ENCODE measurements at regions of chr13 and their contacts with region 1.

Region 1: DNA sequence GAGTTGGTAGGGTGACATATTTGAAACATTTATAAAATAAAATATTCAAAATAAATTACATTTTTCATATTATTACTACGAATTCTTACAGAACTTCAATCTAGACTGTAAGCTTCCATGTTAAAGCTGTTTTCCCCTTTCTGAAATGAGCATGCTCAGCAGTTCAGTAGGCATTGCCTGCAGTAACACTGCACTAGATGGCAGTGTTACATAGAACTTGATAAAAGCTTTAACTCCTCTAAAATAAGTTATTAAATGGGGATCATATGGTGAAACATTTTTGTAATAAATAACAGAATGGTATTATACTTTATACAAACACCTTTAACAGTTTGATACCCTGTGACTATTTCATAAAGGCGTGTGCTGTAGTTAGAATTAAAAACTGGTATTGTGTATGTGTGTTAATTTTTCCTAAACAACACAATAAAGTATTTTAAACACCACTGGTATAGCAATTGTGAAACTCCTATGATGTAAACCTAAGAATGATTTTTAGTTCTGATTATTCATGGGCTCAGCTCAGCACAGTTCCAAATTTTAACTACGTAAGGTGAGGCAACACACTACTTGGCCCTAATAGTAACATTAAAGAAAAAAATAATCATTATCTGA is 11.6 kb upstream of the GPR18 start:
- DNase-seq: peak; percentile 38
- ATAC-seq: peak; percentile 78
- H3K4me3 ChIP-seq: no peak overlapping the region
- H3K27ac ChIP-seq: no peak overlapping the region
- H3K4me1 ChIP-seq: no peaks in the 10 kb centered on the region; a peak in 1 of 4 replicates
- H3K27me3 ChIP-seq: no peaks in the 10 kb centered on the region
- CTCF ChIP-seq: peak; percentile 66 to 97 (median 75)
- POLR2A ChIP-seq: no peak
- RAD21 ChIP-seq: peak; percentile 84

Region 2: DNA sequence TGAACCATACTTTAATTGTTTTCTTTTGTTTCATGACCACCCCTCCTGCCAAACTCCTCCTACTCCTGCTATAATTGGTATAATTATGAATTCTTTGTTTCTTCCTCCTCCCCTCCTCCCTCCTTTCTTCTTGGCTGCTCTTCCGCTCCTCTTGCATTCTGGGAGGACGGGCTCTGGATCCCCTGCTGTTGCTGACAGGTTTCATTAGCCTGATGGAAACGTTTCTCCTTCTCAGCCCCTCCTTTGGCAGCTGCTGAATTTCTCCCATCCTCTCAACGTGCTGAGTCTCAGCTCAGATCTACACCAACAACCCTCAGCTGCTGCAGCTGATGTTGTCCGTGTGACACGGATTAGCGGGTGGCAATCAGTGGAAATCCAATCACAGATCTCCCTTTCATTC is 166.2 kb before region 1 on chr13:
- CTCF ChIA-PET with region 1: no interaction called
- POLR2A ChIA-PET with region 1: no interaction called
- RAD21 ChIA-PET with region 1: no interaction called
- intact Hi-C with region 1: no loop called
- DNase-seq: no peak
- ATAC-seq: no peak
- H3K4me3 ChIP-seq: no peak overlapping the region
- H3K27ac ChIP-seq: no peak overlapping the region
- H3K4me1 ChIP-seq: no peaks in the 10 kb centered on the region
- H3K27me3 ChIP-seq: no peaks in the 10 kb centered on the region
- CTCF ChIP-seq: no peak
- POLR2A ChIP-seq: no peak
- RAD21 ChIP-seq: no peak

Region 3: GRCh38 chr13:99176309-99177276 is 93.1 kb before region 1 on chr13:
- CTCF ChIA-PET with region 1: interaction called, 54 read pairs
- POLR2A ChIA-PET with region 1: interaction called, 3 read pairs
- RAD21 ChIA-PET with region 1: interaction called, 7 to 11 read pairs
- intact Hi-C with region 1: loop called (anchors 1 kb)
- DNase-seq: peak; percentile 62
- ATAC-seq: peak; percentile 98
- H3K4me3 ChIP-seq: no peak overlapping the region
- H3K27ac ChIP-seq: no peak overlapping the region
- H3K4me1 ChIP-seq: peaks cover 0 to 10% of the 10 kb centered on the region in 2 experiments; a peak in 1 of 4 replicates
- H3K27me3 ChIP-seq: no peaks in the 10 kb centered on the region
- CTCF ChIP-seq: peak; percentile 91 to 98 (median 94)
- POLR2A ChIP-seq: no peak
- RAD21 ChIP-seq: peak; percentile 94

Region 4: DNA sequence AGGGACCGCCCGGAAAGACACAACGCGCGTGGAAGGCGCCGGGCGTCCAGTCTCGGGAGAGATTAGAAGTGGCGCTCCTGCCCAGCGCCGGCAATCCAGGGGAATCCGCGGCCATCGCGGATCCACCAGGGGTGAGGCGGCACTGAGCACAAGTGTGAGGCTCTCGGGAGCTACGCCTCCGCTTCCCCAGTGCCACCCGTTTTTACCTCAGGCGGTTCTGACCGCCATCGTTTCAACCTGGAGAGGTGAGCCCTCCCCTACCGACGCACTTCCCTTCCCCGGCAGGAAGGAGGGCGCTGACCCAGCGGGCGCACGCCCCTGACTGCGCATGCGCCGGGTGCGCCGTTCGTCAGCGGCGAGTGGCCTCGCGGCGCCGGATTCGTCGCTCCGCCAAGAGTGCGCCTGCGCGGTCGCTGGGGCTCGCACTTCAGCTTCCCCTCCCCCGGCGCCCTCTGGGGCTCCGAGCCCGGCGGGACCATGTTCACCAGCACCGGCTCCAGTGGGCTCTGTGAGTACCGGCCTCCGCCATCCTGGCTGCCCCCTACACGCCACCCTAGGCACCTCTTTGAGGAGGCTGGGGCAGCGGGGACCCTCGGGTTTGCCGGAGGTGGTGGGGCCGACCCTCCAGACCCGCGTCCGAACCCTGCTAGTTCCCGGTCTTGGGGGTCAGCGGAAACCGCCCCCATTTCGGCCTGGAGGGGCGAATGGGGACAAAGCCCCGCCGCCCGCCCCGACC is 69.1 kb before region 1 on chr13 and contains the start of gene UBAC2:
- CTCF ChIA-PET with region 1: interaction called, 10 read pairs
- POLR2A ChIA-PET with region 1: interaction called, 8 read pairs
- RAD21 ChIA-PET with region 1: interaction called in 1 of 2 experiments, 4 read pairs
- intact Hi-C with region 1: loop called (anchors 5 kb)
- DNase-seq: peak; percentile 83
- ATAC-seq: peak; percentile 77
- H3K4me3 ChIP-seq: peak within 1 kb of the TSS; percentile 75 to 95
- H3K27ac ChIP-seq: peak within 1 kb of the TSS; percentile 93
- H3K4me1 ChIP-seq: peaks cover 37 to 46% of the 10 kb centered on the region in 2 experiments
- H3K27me3 ChIP-seq: no peaks in the 10 kb centered on the region
- CTCF ChIP-seq: no peak
- POLR2A ChIP-seq: peak; percentile 97
- RAD21 ChIP-seq: no peak
- total RNA-seq, gene UBAC2: 67.4 TPM

Region 5: GRCh38 chr13:99386911-99387788 is 117.4 kb after region 1 on chr13:
- CTCF ChIA-PET with region 1: interaction called, 12 read pairs
- POLR2A ChIA-PET with region 1: no interaction called
- RAD21 ChIA-PET with region 1: no interaction called
- intact Hi-C with region 1: loop called (anchors 5 kb)
- DNase-seq: peak; percentile 12
- ATAC-seq: peak; percentile 80
- H3K4me3 ChIP-seq: no peak overlapping the region
- H3K27ac ChIP-seq: no peak overlapping the region
- H3K4me1 ChIP-seq: peaks cover 0 to 7% of the 10 kb centered on the region in 2 experiments; a peak in 2 of 4 replicates
- H3K27me3 ChIP-seq: no peaks in the 10 kb centered on the region
- CTCF ChIP-seq: peak; percentile 86 to 98 (median 92)
- POLR2A ChIP-seq: no peak
- RAD21 ChIP-seq: peak; percentile 63

Region 6: DNA sequence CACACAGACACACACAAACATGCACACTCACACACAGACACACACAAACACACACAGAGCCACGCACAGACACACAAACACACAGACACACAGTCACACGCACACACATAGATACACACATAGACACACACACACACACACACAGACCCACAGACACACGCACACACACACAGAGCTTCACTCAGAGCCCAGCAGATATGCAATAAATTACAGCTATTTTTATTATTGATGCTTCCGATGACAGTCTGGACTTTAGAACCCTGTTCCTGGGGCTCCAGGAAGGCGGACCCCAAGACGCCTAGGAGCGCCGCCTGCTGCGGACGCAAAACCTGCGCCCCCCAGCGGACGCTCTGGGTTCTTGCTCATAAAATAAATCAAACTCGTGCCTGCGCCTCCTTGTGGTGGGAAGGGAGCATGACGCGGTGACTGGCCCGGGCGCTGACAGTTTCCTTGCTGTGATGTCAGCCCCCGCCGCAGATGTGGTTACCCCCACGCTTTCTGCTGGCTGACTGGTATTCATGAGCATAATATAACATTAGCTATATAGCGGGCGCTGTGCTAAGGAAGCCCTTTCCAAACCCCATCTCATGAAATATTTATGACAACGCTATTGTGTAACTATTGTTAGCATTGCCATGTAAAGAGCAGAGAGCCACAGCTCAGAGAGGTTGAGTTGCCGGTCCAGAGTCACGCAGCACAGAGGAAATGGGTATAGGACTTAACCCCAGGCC is 167.1 kb after region 1 on chr13:
- CTCF ChIA-PET with region 1: interaction called, 90 read pairs
- POLR2A ChIA-PET with region 1: no interaction called
- RAD21 ChIA-PET with region 1: interaction called, 3 to 6 read pairs
- intact Hi-C with region 1: loop called (anchors 1 kb)
- DNase-seq: peak; percentile 78
- ATAC-seq: peak; percentile 72
- H3K4me3 ChIP-seq: peak overlapping the region in 1 of 2 experiments; percentile 34; a peak in 3 of 4 replicates
- H3K27ac ChIP-seq: no peak overlapping the region
- H3K4me1 ChIP-seq: peaks cover 6 to 43% of the 10 kb centered on the region in 2 experiments; a peak in 3 of 4 replicates
- H3K27me3 ChIP-seq: no peaks in the 10 kb centered on the region
- CTCF ChIP-seq: peak; percentile 100
- POLR2A ChIP-seq: no peak
- RAD21 ChIP-seq: peak; percentile 92

Measured in HCT116 (cell line).